Sigmoid colon (tissue), 7 donors: ENCODE measurements at regions of chr5 and their contacts with region 1.

Region 1: DNA sequence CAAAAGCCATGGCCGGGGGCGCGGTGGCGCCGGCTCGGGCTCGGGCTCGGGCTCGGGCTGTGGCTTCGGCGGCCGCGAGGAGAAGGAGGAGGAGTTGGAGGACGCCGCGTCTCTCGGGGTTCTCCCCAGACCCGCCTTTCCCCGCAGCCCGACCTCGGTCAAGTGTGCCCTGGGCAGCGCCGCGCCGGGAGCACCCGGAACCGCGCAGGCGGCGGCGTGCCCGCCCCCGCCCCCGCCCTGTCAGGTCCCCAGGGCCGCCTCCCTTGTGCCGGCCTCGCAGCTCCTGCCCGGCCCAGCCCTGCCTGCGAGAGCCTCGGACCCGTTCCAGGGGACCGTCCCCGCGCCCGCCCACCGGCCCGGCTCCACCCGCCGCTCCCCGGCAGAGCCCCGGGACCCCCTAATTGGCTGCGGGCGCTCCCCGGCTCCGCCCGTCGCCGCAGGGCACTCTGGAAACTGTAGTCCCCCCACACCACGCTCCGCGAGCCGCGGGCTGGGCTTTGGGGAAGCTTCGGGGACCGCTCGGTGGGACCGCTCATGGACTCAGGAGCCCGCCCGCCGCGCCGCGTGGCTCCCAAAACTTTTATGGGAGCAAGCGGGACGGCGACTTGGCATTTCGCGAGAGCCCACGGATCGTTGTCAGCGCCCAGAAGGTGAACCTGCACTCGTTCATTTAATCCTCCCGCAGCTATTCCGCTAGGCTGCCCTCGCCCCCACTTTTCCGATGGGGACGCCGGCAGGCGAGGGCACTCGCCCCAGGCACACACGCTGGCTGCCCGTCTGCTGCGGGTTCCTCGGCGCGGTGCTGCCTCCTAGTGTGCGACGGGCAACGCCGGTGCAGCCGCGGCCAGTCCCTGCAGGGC is at the start of gene STK10:
- DNase-seq: peak; percentile 96
- H3K4me3 ChIP-seq: peak within 1 kb of the TSS; percentile 72 to 87 (median 80)
- H3K27ac ChIP-seq: peak within 1 kb of the TSS; percentile 89 to 93 (median 92)
- H3K4me1 ChIP-seq: peaks cover 0 to 26% (median 16%) of the 10 kb centered on the region in 4 donors
- H3K27me3 ChIP-seq: no peaks in the 10 kb centered on the region
- CTCF ChIP-seq: peak; percentile 70 to 91 (median 81)
- EP300 ChIP-seq: no peak
- POLR2A ChIP-seq: no peak
- total RNA-seq, gene STK10: 8.9 to 16.1 (median 12.6) TPM

Region 2: GRCh38 chr5:171913987-171914273 is 274.3 kb before region 1 on chr5:
- intact Hi-C with region 1: loop called (anchors 2 kb)
- DNase-seq: no peak
- H3K4me3 ChIP-seq: no peak overlapping the region
- H3K27ac ChIP-seq: no peak overlapping the region
- H3K4me1 ChIP-seq: peaks cover 0 to 29% (median 18%) of the 10 kb centered on the region in 4 donors
- H3K27me3 ChIP-seq: no peaks in the 10 kb centered on the region
- CTCF ChIP-seq: no peak
- EP300 ChIP-seq: no peak
- POLR2A ChIP-seq: no peak

Region 3: DNA sequence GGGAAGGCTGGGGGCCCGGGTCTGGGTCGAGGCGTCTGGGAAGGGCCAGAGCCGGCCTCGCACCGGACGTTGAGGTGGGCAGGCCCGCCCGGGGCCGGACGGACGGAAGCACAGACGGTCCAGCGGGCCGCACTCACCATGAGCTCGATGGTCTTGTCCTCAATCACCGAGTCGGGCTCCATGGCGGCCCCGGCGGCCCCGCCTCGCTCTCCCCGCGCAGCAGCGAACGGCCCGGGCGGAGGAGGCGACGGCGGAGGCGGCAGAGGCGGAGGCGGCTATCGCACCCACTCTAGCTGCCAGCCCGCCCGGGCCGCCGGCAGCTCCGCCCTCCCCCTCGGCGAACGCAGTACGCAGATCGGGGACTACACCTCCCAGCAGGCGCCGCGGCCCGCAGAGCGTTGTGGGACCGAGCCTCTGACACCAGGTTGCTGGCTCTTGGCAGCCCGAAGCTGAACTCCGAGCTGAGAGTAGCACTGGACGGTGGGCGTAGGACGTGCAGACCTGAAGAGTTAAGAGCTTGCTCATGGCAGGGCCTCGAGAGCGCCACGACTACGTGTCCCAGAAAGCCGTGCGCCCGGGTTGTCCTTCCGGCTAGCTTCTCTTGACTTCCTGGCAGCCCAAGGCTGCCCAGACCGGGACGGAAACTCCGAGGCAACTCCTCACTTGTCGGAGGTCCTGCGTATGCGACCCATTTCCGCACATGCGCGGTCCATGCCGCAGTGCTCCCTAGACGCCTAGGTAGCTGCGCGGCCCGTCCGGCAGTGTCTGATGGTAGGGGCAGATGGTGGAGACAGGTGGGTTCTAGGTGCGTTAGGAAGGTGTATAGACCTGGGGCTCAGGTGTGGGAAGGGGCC is 181.7 kb before region 1 on chr5 and contains the start of gene FBXW11:
- intact Hi-C with region 1: loop called (anchors 2 kb)
- DNase-seq: peak; percentile 99
- H3K4me3 ChIP-seq: peak within 1 kb of the TSS; percentile 79 to 99 (median 96)
- H3K27ac ChIP-seq: peak within 1 kb of the TSS; percentile 92 to 99 (median 98)
- H3K4me1 ChIP-seq: peaks cover 0 to 46% (median 40%) of the 10 kb centered on the region in 4 donors
- H3K27me3 ChIP-seq: no peaks in the 10 kb centered on the region
- CTCF ChIP-seq: no peak
- EP300 ChIP-seq: no peak
- POLR2A ChIP-seq: peak; percentile 77 to 79
- total RNA-seq, gene FBXW11: 42.9 to 67.1 (median 49.4) TPM

Region 4: DNA sequence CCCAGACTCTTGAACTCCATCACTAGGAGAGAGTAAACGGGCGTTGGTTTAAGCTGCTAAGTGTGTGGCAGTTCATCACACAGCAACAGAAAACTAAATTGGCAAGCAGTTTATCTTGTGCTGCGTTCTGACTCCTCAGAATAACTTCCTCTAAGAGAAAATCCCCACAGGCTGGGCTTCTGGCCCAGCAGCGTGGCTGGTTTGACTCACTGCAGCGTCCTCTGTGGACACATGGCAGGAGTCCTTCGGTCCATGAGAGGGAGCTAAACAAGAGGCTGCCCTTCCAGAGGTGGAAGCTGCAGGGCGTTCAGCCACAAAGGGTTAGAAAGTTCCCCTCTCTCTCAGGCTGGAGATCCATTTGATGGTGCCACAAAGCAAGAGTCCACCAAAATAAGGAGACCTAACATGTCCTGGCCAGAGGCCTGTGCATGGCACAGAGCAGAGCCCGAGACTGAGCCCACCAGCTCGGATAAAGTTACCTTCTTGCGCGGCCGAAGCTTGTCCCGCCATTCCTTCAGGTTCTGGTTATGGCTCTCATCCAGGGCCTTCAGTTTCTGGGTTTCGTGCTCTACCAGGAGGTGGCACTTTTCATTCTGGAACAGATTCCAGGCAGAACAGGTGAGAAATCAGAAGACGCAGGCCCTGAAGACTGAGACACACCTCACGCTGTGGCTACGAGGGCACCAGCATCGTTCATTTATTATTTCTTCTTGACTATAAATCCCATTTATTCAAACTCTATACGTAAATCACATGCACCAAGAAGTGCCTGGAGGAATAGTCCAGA is 135.6 kb before region 1 on chr5:
- intact Hi-C with region 1: loop called (anchors 5 kb)
- DNase-seq: peak; percentile 83
- H3K4me3 ChIP-seq: no peak overlapping the region
- H3K27ac ChIP-seq: peak overlapping the region; percentile 32 to 73 (median 61)
- H3K4me1 ChIP-seq: peaks cover 0 to 16% (median 13%) of the 10 kb centered on the region in 4 donors
- H3K27me3 ChIP-seq: no peaks in the 10 kb centered on the region
- CTCF ChIP-seq: peak in 1 of 4 experiments; percentile 25
- EP300 ChIP-seq: no peak
- POLR2A ChIP-seq: no peak

Region 5: GRCh38 chr5:172106511-172107356 is 81.5 kb before region 1 on chr5:
- intact Hi-C with region 1: loop called (anchors 1 kb)
- DNase-seq: peak; percentile 78
- H3K4me3 ChIP-seq: peak overlapping the region; percentile 28 to 43 (median 36)
- H3K27ac ChIP-seq: peak overlapping the region; percentile 24 to 70 (median 57)
- H3K4me1 ChIP-seq: peaks cover 0 to 62% (median 53%) of the 10 kb centered on the region in 4 donors
- H3K27me3 ChIP-seq: no peaks in the 10 kb centered on the region
- CTCF ChIP-seq: peak; percentile 62 to 98 (median 90)
- EP300 ChIP-seq: no peak
- POLR2A ChIP-seq: no peak

Region 6: GRCh38 chr5:172412724-172413286 is 224.5 kb after region 1 on chr5:
- intact Hi-C with region 1: no loop called
- DNase-seq: peak; percentile 96
- H3K4me3 ChIP-seq: no peak overlapping the region
- H3K27ac ChIP-seq: peak overlapping the region; percentile 79 to 96 (median 86)
- H3K4me1 ChIP-seq: peaks cover 2 to 72% (median 68%) of the 10 kb centered on the region in 4 donors
- H3K27me3 ChIP-seq: no peaks in the 10 kb centered on the region
- CTCF ChIP-seq: no peak
- EP300 ChIP-seq: peak; percentile 30 to 85 (median 56)
- POLR2A ChIP-seq: no peak

Region 7: GRCh38 chr5:172559004-172559932 is 371.0 kb after region 1 on chr5:
- intact Hi-C with region 1: no loop called
- DNase-seq: peak; percentile 95
- H3K4me3 ChIP-seq: peak overlapping the region in 3 of 4 donors; percentile 16 to 23 (median 17)
- H3K27ac ChIP-seq: peak overlapping the region; percentile 84 to 94 (median 87)
- H3K4me1 ChIP-seq: peaks cover 0 to 89% (median 75%) of the 10 kb centered on the region in 4 donors
- H3K27me3 ChIP-seq: no peaks in the 10 kb centered on the region
- CTCF ChIP-seq: no peak
- EP300 ChIP-seq: peak in 3 of 4 donors; percentile 16 to 66 (median 29)
- POLR2A ChIP-seq: no peak